ENCODE measurements at regions of chr3 and their contacts with region 1.

Region 1: GRCh38 chr3:25594007-25594502 is 70.7 kb downstream of the TOP2B start:
- DNase-seq: peak in 1 of 2 donors; percentile 27
- ATAC-seq: peak; percentile 49 to 76 (median 55)
- H3K4me3 ChIP-seq: no peak overlapping the region
- H3K27ac ChIP-seq: peak overlapping the region in 8 of 10 donors; percentile 27 to 80 (median 64)
- H3K4me1 ChIP-seq: peaks cover 5 to 50% (median 45%) of the 10 kb centered on the region in 9 donors
- H3K27me3 ChIP-seq: no peaks in the 10 kb centered on the region
- CTCF ChIP-seq: peak; percentile 76 to 90 (median 82)

Region 2: DNA sequence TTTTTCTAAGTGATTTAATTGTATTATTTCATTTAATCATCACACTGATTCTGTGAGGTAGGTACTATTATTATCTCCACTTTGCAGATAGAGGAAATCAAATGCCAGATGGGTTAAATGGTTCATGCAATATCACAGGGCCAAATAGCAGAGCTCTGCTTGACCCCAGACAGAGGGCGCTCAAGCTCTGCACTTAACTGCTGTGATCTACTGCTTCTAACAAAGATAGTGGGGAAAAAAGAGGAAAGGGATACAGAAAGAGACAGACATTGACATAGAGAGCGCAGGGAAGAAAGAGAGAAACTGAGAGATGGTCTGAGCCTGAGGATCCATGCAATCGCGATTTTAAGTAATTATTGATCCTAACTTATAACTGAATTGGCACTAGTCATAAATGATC is 820.3 kb before region 1 on chr3:
- intact Hi-C with region 1: loop called in 8 of 10 experiments (anchors 2 to 10 kb)
- DNase-seq: peak; percentile 20 to 41
- ATAC-seq: peak; percentile 41 to 75 (median 60)
- H3K4me3 ChIP-seq: no peak overlapping the region
- H3K27ac ChIP-seq: no peak overlapping the region
- H3K4me1 ChIP-seq: no peaks in the 10 kb centered on the region
- H3K27me3 ChIP-seq: no peaks in the 10 kb centered on the region
- CTCF ChIP-seq: peak; percentile 57 to 86 (median 77)

Region 3: DNA sequence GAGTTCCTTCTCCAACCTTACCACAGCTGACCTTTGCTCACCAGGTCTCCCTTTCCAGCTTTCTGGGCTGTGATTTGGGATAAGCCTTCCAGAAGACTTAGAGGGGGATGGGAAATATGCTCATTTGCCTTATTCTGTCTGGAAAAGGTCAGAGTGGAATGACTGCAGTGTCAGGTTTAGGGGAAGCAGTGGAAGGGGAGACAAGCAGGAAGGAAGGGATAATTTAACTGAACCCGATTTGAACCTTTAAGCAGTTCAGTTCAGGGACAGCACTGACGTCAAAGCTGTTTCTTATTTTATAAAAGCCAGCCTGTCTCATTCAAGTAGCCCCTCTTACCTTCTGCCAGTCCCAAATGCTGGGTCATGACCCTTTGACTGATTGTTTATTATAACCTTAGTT is 584.4 kb before region 1 on chr3:
- intact Hi-C with region 1: loop called in 1 of 10 experiments (anchors 10 kb)
- DNase-seq: no peak
- ATAC-seq: peak in 2 of 8 donors; percentile 49 to 57
- H3K4me3 ChIP-seq: no peak overlapping the region
- H3K27ac ChIP-seq: no peak overlapping the region
- H3K4me1 ChIP-seq: peaks cover 0 to 17% (median 9%) of the 10 kb centered on the region in 9 donors
- H3K27me3 ChIP-seq: no peaks in the 10 kb centered on the region
- CTCF ChIP-seq: no peak

Region 4: DNA sequence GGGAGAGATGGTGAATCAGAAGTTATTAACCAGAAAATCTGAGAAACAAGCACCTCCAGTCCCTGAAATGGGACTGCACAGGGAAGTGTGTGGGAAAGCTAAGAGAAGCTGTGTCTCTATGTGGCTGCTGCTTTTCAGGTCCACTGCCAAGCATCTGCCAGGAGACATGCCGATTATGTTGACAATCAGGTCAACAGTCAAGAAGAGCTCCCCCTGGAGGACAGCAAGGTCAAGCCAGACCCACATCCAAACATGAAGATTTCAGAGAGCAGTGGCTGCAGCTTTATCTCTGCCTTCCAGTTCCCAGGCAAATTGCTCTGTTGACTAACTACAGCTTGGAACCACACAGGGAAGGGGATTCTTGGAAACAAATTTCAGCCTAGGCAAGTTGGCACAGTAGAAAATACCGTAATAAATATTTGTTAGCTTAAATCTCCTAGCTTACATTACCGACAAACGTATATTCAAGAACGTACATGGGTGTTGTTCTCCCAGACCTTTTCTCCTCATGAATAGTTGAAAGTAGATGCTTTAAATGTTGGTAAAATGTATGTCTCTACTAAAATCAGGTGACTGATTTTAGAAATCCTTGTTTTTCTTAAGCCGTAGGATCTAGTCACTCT is 560.5 kb before region 1 on chr3:
- intact Hi-C with region 1: loop called in 2 of 10 experiments (anchors 5 to 10 kb)
- DNase-seq: peak; percentile 17 to 65
- ATAC-seq: peak; percentile 62 to 90 (median 74)
- H3K4me3 ChIP-seq: no peak overlapping the region
- H3K27ac ChIP-seq: no peak overlapping the region
- H3K4me1 ChIP-seq: peaks cover 0 to 27% (median 12%) of the 10 kb centered on the region in 9 donors
- H3K27me3 ChIP-seq: no peaks in the 10 kb centered on the region
- CTCF ChIP-seq: peak; percentile 49 to 73 (median 64)

Region 5: GRCh38 chr3:25151281-25151902 is 442.7 kb before region 1 on chr3:
- intact Hi-C with region 1: loop called in 1 of 10 experiments (anchors 5 kb)
- DNase-seq: no peak
- ATAC-seq: peak in 6 of 8 donors; percentile 63 to 82 (median 78)
- H3K4me3 ChIP-seq: peak overlapping the region in 7 of 10 donors; percentile 6 to 29 (median 19)
- H3K27ac ChIP-seq: peak overlapping the region in 9 of 10 donors; percentile 44 to 79 (median 62)
- H3K4me1 ChIP-seq: peaks cover 0 to 21% (median 5%) of the 10 kb centered on the region in 9 donors
- H3K27me3 ChIP-seq: no peaks in the 10 kb centered on the region
- CTCF ChIP-seq: no peak

Region 6: GRCh38 chr3:25433868-25434267 is 160.2 kb before region 1 on chr3:
- intact Hi-C with region 1: loop called (anchors 2 to 10 kb)
- DNase-seq: peak; percentile 17 to 32
- ATAC-seq: peak; percentile 26 to 78 (median 56)
- H3K4me3 ChIP-seq: peak overlapping the region in 4 of 10 donors; percentile 10 to 81 (median 43)
- H3K27ac ChIP-seq: peak overlapping the region in 8 of 10 donors; percentile 27 to 97 (median 90)
- H3K4me1 ChIP-seq: peaks cover 2 to 52% (median 32%) of the 10 kb centered on the region in 9 donors
- H3K27me3 ChIP-seq: peaks cover 0 to 8% (median 0%) of the 10 kb centered on the region in 7 donors
- CTCF ChIP-seq: no peak

Measured in heart right ventricle (tissue), 16 donors.